ENCODE measurements at regions of chr16 and their contacts with region 1.

Region 1: GRCh38 chr16:29805378-29806098 is 791 bp upstream of the MAZ start:
- DNase-seq: peak; percentile 97 to 99 (median 97)
- H3K4me3 ChIP-seq: peak overlapping the region; percentile 87
- H3K4me3 Mint-ChIP-seq: peak overlapping the region; percentile 93 to 100 (median 98)
- H3K27ac ChIP-seq: peak overlapping the region; percentile 95
- H3K27ac Mint-ChIP-seq: peak overlapping the region; percentile 94 to 100 (median 99)
- H3K4me1 ChIP-seq: peaks cover 36% of the 10 kb centered on the region
- H3K4me1 Mint-ChIP-seq: peaks cover 41 to 47% (median 47%) of the 10 kb centered on the region in 3 donors
- H3K27me3 ChIP-seq: no peaks in the 10 kb centered on the region
- H3K27me3 Mint-ChIP-seq: peaks cover 0 to 4% of the 10 kb centered on the region in 2 donors

Region 2: GRCh38 chr16:29738514-29738913 is 67.0 kb before region 1 on chr16:
- CTCF ChIA-PET with region 1: interaction called, 15 read pairs
- POLR2A ChIA-PET with region 1: interaction called, 16 read pairs
- DNase-seq: peak; percentile 35 to 80 (median 79)
- H3K4me3 ChIP-seq: no peak overlapping the region
- H3K4me3 Mint-ChIP-seq: peak overlapping the region; percentile 24 to 78 (median 67)
- H3K27ac ChIP-seq: peak overlapping the region; percentile 21
- H3K27ac Mint-ChIP-seq: peak overlapping the region; percentile 89 to 98 (median 96)
- H3K4me1 ChIP-seq: peaks cover 78% of the 10 kb centered on the region
- H3K4me1 Mint-ChIP-seq: peaks cover 78 to 85% (median 82%) of the 10 kb centered on the region in 3 donors
- H3K27me3 ChIP-seq: no peaks in the 10 kb centered on the region
- H3K27me3 Mint-ChIP-seq: no peaks in the 10 kb centered on the region

Region 3: DNA sequence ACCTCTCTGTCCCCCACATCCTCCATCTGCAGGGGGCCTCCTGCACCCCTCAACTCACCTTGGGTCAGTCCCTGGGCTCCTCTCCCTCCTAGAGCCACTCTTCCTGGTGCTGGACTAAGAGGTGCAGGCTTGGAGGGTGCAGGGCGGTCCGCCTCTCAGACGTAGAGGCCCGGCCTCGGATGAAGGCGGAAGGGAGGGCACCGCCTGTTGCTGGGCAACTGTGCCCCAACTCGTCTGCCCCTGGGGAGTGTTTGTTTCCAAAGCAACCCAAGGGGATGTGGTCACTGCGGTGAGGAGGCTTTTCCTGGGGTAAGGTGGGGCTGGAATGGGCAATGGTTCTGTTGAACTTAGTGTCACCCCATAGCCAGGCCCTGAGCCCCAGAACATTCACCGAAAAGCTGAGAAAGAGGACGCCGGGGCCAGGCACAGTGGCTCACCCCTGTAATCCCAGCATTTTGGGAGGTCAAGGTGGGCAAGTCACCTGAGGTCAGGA is 59.6 kb before region 1 on chr16 and contains the start of gene C16orf54:
- CTCF ChIA-PET with region 1: interaction called, 4 read pairs
- POLR2A ChIA-PET with region 1: interaction called, 16 read pairs
- DNase-seq: peak; percentile 89 to 99 (median 98)
- H3K4me3 ChIP-seq: peak within 1 kb of the TSS; percentile 86
- H3K4me3 Mint-ChIP-seq: peak within 1 kb of the TSS; percentile 96 to 100 (median 99)
- H3K27ac ChIP-seq: peak within 1 kb of the TSS; percentile 97
- H3K27ac Mint-ChIP-seq: peak within 1 kb of the TSS; percentile 98 to 100 (median 100)
- H3K4me1 ChIP-seq: peaks cover 65% of the 10 kb centered on the region
- H3K4me1 Mint-ChIP-seq: peaks cover 57 to 70% (median 61%) of the 10 kb centered on the region in 3 donors
- H3K27me3 ChIP-seq: no peaks in the 10 kb centered on the region
- H3K27me3 Mint-ChIP-seq: peaks cover 0 to 5% of the 10 kb centered on the region in 2 donors
- total RNA-seq, gene C16orf54: 32.3 to 33.3 TPM

Region 4: GRCh38 chr16:29784901-29785500 is 20.5 kb before region 1 on chr16:
- CTCF ChIA-PET with region 1: interaction called, 42 read pairs
- POLR2A ChIA-PET with region 1: interaction called, 59 read pairs
- DNase-seq: peak; percentile 55 to 79 (median 62)
- H3K4me3 ChIP-seq: peak overlapping the region; percentile 33
- H3K4me3 Mint-ChIP-seq: peak overlapping the region; percentile 50 to 77 (median 69)
- H3K27ac ChIP-seq: no peak overlapping the region
- H3K27ac Mint-ChIP-seq: peak overlapping the region in 7 of 8 donors; percentile 47 to 83 (median 74)
- H3K4me1 ChIP-seq: peaks cover 20% of the 10 kb centered on the region
- H3K4me1 Mint-ChIP-seq: peaks cover 17 to 28% (median 27%) of the 10 kb centered on the region in 3 donors
- H3K27me3 ChIP-seq: no peaks in the 10 kb centered on the region
- H3K27me3 Mint-ChIP-seq: peaks cover 0 to 3% of the 10 kb centered on the region in 2 donors

Region 5: DNA sequence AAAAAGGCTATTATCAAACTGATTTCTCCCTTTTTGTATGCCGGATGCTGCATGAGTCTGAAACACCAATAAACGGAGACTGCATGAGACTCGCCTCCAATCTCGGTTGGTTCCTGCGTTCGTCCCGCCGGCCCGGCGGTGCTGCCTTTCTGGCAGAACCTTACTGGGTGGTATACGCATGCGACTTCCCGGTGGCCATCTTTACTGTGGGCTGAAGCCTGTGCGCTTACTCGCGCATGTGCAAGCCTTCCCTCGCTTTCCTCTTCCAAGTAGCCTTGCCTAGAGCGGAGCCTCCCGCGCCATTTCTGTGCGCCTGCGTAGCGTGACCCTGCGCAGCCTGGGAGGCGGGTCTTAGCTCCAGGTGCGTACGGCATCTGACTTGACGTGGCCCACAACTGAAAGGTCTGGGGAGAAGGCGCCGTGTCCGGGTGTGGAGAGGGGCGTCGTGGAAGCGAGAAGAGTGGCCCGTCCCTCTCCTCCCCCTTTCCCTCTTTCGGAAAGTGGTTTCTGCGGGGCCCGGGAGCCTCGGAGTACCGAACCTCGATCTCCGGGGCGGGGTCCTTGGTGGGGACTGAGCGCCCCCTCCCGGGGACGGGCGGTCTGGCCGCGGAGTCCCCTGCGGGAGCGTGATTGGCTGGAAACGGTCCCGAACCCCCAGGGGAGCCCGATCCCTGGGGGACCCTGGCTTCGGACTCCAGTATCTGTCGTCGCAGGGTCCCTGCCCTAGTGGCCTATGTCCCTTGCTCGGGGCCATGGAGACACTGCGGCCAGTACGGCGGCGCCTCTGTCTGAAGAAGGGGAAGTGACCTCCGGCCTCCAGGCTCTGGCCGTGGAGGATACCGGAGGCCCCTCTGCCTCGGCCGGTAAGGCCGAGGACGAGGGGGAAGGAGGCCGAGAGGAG is 10.5 kb after region 1 on chr16 and contains the start of gene PAGR1:
- CTCF ChIA-PET with region 1: interaction called, 92 read pairs
- POLR2A ChIA-PET with region 1: interaction called, 59 read pairs
- DNase-seq: peak; percentile 95 to 99 (median 99)
- H3K4me3 ChIP-seq: peak within 1 kb of the TSS; percentile 94
- H3K4me3 Mint-ChIP-seq: peak within 1 kb of the TSS; percentile 89 to 99 (median 93)
- H3K27ac ChIP-seq: peak within 1 kb of the TSS; percentile 89
- H3K27ac Mint-ChIP-seq: peak within 1 kb of the TSS; percentile 93 to 99 (median 98)
- H3K4me1 ChIP-seq: peaks cover 54% of the 10 kb centered on the region
- H3K4me1 Mint-ChIP-seq: peaks cover 53 to 79% (median 62%) of the 10 kb centered on the region in 3 donors
- H3K27me3 ChIP-seq: no peaks in the 10 kb centered on the region
- H3K27me3 Mint-ChIP-seq: peaks cover 0 to 4% of the 10 kb centered on the region in 2 donors
- total RNA-seq, gene PAGR1: 41.9 to 44.3 TPM

Region 6: GRCh38 chr16:29825145-29826044 is 19.9 kb after region 1 on chr16:
- CTCF ChIA-PET with region 1: interaction called, 92 read pairs
- POLR2A ChIA-PET with region 1: interaction called, 17 read pairs
- DNase-seq: peak in 1 of 5 donors; percentile 39
- H3K4me3 ChIP-seq: peak overlapping the region; percentile 50
- H3K4me3 Mint-ChIP-seq: peak overlapping the region; percentile 46 to 79 (median 71)
- H3K27ac ChIP-seq: no peak overlapping the region
- H3K27ac Mint-ChIP-seq: peak overlapping the region; percentile 61 to 93 (median 88)
- H3K4me1 ChIP-seq: peaks cover 94% of the 10 kb centered on the region
- H3K4me1 Mint-ChIP-seq: peaks cover 51 to 78% (median 55%) of the 10 kb centered on the region in 3 donors
- H3K27me3 ChIP-seq: no peaks in the 10 kb centered on the region
- H3K27me3 Mint-ChIP-seq: no peaks in the 10 kb centered on the region

Region 7: DNA sequence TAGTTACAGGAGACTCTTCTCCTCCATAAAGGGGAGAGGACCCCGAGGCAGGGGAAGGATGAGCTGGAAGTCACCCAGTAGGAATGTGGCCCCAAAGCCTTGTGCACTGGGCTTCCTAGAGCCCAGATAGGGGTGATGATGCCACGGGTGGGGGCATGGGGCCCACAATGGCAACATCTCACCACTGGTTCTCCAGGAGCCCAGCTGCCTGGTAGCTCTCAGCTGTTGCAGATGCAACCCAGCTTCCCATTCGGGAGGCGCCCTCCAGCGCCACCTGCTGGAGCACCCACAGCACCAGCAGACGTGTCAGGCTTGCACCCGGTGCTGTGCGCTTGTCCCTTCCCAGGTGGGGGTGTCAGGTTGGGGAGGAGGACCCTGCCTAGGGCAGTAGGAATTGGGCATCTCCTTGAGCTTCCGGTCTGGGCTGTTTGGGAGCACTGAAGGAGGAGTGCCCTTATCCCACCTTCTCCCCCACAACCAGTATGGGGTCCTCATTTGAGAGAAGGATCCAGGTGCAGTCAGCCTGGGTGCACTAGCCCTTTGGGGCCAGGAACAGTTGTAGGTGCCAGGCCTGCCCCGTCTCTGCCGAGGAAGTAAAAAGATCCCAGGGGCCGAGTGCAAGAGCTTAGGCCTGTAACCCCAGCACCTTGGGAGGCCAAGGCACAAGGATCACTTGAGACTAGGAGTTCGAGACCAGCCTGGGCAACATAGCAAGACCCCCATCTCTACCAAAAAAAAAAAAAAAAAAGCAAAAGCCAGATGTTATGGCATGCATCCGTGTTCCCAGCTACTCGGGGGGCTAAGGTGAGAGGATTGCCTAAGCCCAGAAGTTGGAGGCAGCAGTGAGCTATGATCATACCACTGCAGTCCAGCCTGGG is 43.1 kb after region 1 on chr16:
- CTCF ChIA-PET with region 1: interaction called, 64 read pairs
- POLR2A ChIA-PET with region 1: interaction called, 9 read pairs
- DNase-seq: peak; percentile 66 to 84 (median 74)
- H3K4me3 ChIP-seq: no peak overlapping the region
- H3K4me3 Mint-ChIP-seq: no peak overlapping the region
- H3K27ac ChIP-seq: no peak overlapping the region
- H3K27ac Mint-ChIP-seq: peak overlapping the region; percentile 45 to 68 (median 56)
- H3K4me1 ChIP-seq: no peaks in the 10 kb centered on the region
- H3K4me1 Mint-ChIP-seq: peaks cover 3 to 8% (median 5%) of the 10 kb centered on the region in 3 donors
- H3K27me3 ChIP-seq: no peaks in the 10 kb centered on the region
- H3K27me3 Mint-ChIP-seq: no peaks in the 10 kb centered on the region